ENCODE measurements at regions of chr13 and their contacts with region 1.

Region 1: DNA sequence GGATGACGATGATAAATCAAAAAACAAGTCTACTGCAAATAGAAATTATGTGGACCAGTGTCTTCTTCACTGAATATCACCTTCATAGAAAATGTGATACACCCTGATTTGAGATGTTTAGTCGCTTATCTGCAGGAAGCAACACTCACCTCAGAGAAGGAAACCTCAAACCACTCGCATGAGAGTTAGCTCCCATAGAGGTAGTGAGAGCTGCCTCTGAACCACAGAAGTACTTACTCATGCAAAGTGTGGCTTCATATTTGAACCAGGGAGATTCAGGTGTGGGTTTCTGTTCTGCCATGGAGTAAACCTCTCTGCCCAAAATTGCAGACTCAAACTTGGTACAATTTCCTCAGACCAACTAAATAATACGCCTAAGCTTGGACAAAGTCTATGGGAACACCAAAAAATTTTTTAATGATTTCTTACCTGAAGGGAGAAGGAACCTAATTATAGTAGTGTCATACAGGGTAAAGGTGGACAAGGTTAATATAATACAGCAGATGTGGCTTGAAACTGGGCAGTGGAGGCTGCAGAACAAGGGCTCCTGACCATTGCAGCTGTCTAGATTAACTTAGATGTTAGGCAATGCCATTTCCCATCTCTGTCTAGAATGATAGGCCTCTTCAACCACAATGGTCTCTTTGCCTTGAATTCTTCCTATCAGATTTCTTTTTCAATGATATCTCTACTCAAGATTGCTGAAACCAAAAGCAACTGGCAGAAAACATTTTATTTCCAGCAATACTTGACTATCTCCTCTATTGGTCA is 29.6 kb upstream of the RCBTB2 start:
- DNase-seq: no peak
- ATAC-seq: peak; percentile 44

Region 2: DNA sequence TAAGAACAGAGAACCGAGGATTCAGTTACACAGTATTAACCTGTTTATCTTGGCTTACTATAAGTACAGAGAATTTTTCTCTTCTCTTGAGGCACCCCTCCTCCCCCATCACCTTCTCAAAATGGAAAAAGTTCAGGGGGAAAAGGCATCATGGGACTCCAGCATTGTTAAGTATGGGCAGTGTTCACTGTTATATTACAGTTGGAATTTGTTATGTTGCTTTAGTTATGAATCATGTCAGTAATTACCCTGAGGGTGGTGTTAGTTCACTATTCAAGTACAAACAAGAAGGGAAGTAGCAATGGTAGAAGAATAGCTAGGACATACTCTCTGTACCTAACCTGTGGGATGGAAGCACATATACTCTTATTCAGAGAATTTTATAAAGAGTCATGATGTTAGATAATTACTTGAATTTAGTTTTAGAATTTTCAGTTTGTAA is 161.6 kb before region 1 on chr13:
- intact Hi-C with region 1: loop called in 1 of 2 experiments (anchors 10 kb)
- DNase-seq: no peak
- ATAC-seq: peak; percentile 97

Measured in left colon (tissue), 2 donors.